Right cardiac atrium (tissue), 5 donors: ENCODE measurements at regions of chr16 and their contacts with region 1.

Region 1: DNA sequence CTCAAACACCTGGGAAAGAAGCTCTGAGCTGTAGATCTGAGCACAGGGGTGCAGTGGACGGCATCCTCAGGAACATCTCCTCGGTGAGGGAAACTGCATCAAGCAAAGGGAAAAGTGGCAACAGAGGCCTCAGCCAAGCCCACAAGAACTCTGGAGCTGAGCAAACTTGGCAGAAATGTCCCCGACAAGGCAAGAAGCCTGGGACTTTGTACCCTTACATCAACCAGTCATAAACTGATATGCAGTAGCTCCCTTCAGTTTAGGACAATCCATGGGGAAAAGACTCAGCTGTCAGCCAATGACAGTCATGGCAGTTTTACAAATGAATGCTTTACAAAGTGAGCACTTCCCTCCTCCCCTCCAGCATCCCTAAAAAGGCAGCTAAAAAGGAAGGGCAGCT is 210.0 kb upstream of the DYNLRB2 start:
- DNase-seq: no peak
- ATAC-seq: no peak
- H3K4me3 ChIP-seq: no peak overlapping the region
- H3K27ac ChIP-seq: no peak overlapping the region
- H3K4me1 ChIP-seq: no peaks in the 10 kb centered on the region
- H3K27me3 ChIP-seq: no peaks in the 10 kb centered on the region

Region 2: GRCh38 chr16:80114699-80115098 is 216.1 kb before region 1 on chr16:
- intact Hi-C with region 1: loop called in 1 of 4 experiments (anchors 10 kb)
- DNase-seq: no peak
- ATAC-seq: no peak
- H3K4me3 ChIP-seq: no peak overlapping the region
- H3K27ac ChIP-seq: no peak overlapping the region
- H3K4me1 ChIP-seq: no peaks in the 10 kb centered on the region
- H3K27me3 ChIP-seq: no peaks in the 10 kb centered on the region

Region 3: DNA sequence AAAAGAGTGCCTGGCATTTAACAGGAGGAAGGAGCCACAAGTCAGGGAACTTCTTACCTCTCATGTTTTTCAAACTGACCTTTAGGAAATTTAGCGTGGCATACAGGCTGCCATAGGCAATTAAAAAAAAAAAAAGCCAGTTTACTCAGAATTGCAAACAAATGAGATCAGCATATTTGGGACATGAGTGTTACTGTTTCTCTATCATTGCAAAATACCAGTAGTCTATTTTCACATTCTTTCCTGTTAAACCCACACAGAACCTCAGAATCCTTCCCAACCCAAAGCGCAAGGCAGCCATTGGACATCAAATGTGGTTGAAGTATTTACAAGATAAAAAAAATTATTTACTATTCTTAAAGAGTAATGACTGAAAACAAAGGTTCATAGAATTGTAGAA is 156.4 kb before region 1 on chr16:
- intact Hi-C with region 1: no loop called
- DNase-seq: no peak
- ATAC-seq: no peak
- H3K4me3 ChIP-seq: no peak overlapping the region
- H3K27ac ChIP-seq: no peak overlapping the region
- H3K4me1 ChIP-seq: no peaks in the 10 kb centered on the region
- H3K27me3 ChIP-seq: no peaks in the 10 kb centered on the region